ENCODE measurements at regions of chr14 and their contacts with region 1.

Region 1: GRCh38 chr14:70045844-70046535 is 142.8 kb downstream of the SLC8A3 start:
- DNase-seq: peak; percentile 82
- H3K4me3 ChIP-seq: peak overlapping the region in 1 of 2 experiments; percentile 39; a peak in 1 of 4 replicates
- H3K27ac ChIP-seq: peak overlapping the region in 1 of 2 experiments; percentile 40; a peak in 2 of 4 replicates
- H3K4me1 ChIP-seq: peaks cover 0 to 18% of the 10 kb centered on the region in 2 experiments; a peak in 1 of 4 replicates
- H3K27me3 ChIP-seq: no peaks in the 10 kb centered on the region
- CTCF ChIP-seq: peak; percentile 47
- EP300 ChIP-seq: no peak
- RAD21 ChIP-seq: peak; percentile 96

Region 2: DNA sequence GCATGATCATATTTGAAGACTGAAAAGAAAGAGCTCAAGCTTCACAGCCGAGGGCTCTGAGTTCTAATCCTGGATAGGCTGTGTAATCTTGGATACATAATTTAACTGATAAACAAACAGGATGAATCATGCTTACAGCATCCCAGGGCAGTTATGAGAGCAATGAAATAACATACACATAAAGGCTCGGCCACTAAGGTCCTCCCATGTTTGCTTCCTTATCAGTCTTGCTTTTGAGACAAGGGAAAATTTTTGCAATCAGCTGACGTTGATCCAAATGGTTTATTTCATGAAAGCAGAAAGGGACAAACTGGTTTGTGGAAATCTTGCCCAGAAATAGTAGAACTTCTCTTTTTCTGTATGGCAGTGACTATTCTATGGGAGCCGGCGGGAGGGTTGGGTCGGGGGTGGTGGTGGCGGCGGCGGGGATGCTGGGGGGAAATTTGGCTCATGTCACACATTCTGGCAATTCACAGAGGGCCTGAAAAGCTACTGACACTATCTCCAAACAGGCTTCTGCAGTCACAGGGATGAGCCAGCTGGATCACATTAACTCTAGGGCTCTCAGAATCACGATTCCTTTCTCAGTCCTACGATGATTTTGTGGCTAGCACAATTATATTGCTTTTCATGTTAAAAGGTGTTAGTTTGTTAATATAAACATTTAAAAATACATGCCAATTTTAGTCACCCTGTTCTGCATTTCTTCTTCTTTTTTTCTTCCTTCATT is 18.3 kb after region 1 on chr14:
- CTCF ChIA-PET with region 1: interaction called, 50 read pairs
- POLR2A ChIA-PET with region 1: no interaction called
- DNase-seq: peak; percentile 84
- H3K4me3 ChIP-seq: no peak overlapping the region
- H3K27ac ChIP-seq: peak overlapping the region in 1 of 2 experiments; percentile 97; a peak in 2 of 4 replicates
- H3K4me1 ChIP-seq: peaks cover 0 to 22% of the 10 kb centered on the region in 2 experiments; a peak in 2 of 4 replicates
- H3K27me3 ChIP-seq: no peaks in the 10 kb centered on the region; the same call in 1 of the 2 replicates
- CTCF ChIP-seq: no peak
- EP300 ChIP-seq: no peak
- RAD21 ChIP-seq: no peak

Region 3: GRCh38 chr14:70086685-70087379 is 40.8 kb after region 1 on chr14:
- CTCF ChIA-PET with region 1: interaction called, 61 read pairs
- POLR2A ChIA-PET with region 1: no interaction called
- DNase-seq: peak; percentile 22
- H3K4me3 ChIP-seq: no peak overlapping the region
- H3K27ac ChIP-seq: peak overlapping the region in 1 of 2 experiments; percentile 81; a peak in 2 of 4 replicates
- H3K4me1 ChIP-seq: peaks cover 0 to 16% of the 10 kb centered on the region in 2 experiments; a peak in 2 of 4 replicates
- H3K27me3 ChIP-seq: no peaks in the 10 kb centered on the region
- CTCF ChIP-seq: peak; percentile 60
- EP300 ChIP-seq: peak in 1 of 2 experiments; percentile 53; a peak in 1 of 4 replicates
- RAD21 ChIP-seq: peak; percentile 78

Region 4: DNA sequence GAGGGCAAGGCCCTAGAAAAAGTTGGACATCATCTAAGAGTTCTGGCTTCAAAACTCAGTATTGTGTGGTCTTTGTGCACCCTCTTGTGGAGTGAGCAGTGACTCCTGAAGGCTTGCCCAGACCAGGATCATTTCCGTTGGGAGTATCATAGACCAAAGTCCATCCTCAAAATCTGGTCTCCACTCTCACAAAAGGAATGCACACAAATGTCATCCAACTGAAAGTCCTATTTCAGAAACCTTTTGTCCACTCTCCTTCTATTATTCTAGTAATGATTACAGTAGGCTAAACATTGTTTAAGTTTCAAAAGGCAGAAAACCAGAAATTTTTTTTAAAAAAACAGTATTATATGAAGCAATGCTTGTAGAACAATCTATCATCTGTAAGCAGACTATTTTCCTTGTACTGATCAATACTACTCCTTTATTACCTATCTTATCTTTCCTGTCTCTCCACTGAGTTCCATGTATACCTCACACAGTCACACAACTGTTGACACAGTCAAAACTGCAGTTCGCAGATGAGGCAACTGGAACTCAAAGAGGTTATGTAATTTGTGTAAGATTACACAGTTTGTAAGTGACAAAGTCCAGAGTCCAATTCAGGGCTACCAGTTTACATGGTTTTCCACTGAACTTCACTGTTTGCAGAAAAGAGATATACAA is 272.1 kb after region 1 on chr14:
- CTCF ChIA-PET with region 1: interaction called, 48 read pairs
- POLR2A ChIA-PET with region 1: no interaction called
- DNase-seq: peak; percentile 63
- H3K4me3 ChIP-seq: no peak overlapping the region; a peak in 1 of 4 replicates
- H3K27ac ChIP-seq: no peak overlapping the region
- H3K4me1 ChIP-seq: no peaks in the 10 kb centered on the region; a peak in 1 of 4 replicates
- H3K27me3 ChIP-seq: no peaks in the 10 kb centered on the region
- CTCF ChIP-seq: peak; percentile 58
- EP300 ChIP-seq: no peak
- RAD21 ChIP-seq: peak; percentile 95

Measured in SK-N-SH (cell line).